ENCODE measurements at regions of chr7 and their contacts with region 1.

Region 1: GRCh38 chr7:23254051-23254681 is 7.6 kb downstream of the GPNMB start:
- DNase-seq: no peak
- H3K4me3 ChIP-seq: no peak overlapping the region
- H3K27ac ChIP-seq: no peak overlapping the region
- H3K4me1 ChIP-seq: peaks cover 0 to 7% (median 0%) of the 10 kb centered on the region in 4 donors
- H3K27me3 ChIP-seq: no peaks in the 10 kb centered on the region
- CTCF ChIP-seq: no peak

Region 2: DNA sequence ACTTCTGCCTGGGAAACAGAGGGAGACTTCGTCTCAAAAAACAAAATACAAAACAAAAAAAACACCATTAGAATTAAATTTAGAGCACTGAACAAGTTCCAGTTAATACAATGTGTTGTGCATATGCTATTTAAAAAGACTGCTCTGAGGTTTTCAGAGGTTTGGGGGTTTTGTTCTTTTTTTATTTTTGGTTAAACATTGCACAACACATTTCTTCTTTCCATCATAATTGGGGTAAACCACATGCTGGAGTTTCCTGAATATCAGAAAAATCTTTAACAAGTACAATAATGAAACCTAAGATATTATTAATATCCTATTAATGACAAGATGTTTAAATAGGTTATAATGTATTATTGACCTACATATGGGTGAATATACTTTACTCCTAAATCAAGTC is 189.8 kb after region 1 on chr7:
- intact Hi-C with region 1: no loop called
- DNase-seq: no peak
- H3K4me3 ChIP-seq: no peak overlapping the region
- H3K27ac ChIP-seq: no peak overlapping the region
- H3K4me1 ChIP-seq: no peaks in the 10 kb centered on the region
- H3K27me3 ChIP-seq: peaks cover 0 to 11% of the 10 kb centered on the region in 2 donors
- CTCF ChIP-seq: no peak

Region 3: GRCh38 chr7:25125137-25125946 is 1871.2 kb after region 1 on chr7 and contains the start of gene CYCS:
- intact Hi-C with region 1: loop called (anchors 10 kb)
- DNase-seq: peak; percentile 99
- H3K4me3 ChIP-seq: peak within 1 kb of the TSS; percentile 90
- H3K27ac ChIP-seq: peak within 1 kb of the TSS; percentile 95 to 97
- H3K4me1 ChIP-seq: peaks cover 0 to 11% (median 6%) of the 10 kb centered on the region in 4 donors
- H3K27me3 ChIP-seq: no peaks in the 10 kb centered on the region
- CTCF ChIP-seq: no peak